Mammary epithelial cell (primary cell): ENCODE measurements at regions of chr11 and their contacts with region 1.

Region 1: DNA sequence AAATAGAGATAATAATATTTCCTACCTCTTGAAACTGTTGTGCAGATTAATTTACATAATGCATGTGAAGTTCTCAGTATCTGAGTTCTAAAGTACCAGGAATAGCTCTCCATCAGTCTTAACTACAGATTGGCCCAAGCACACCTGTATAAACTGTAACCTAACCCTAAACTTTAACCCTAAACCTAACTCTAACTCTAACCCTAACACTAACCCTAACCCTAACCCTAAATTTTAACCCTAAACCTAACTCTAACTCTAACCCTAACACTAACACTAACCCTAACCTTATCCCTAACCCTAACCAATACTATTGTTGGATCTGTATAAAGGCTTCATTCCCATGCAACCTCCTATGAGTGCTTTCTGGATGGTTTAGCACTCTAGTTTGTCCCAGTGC is 1445.9 kb upstream of the TENM4 start:
- DNase-seq: no peak
- H3K4me3 ChIP-seq: no peak overlapping the region
- H3K27ac ChIP-seq: no peak overlapping the region
- H3K4me1 ChIP-seq: no peaks in the 10 kb centered on the region
- H3K27me3 ChIP-seq: no peaks in the 10 kb centered on the region
- CTCF ChIP-seq: no peak

Region 2: DNA sequence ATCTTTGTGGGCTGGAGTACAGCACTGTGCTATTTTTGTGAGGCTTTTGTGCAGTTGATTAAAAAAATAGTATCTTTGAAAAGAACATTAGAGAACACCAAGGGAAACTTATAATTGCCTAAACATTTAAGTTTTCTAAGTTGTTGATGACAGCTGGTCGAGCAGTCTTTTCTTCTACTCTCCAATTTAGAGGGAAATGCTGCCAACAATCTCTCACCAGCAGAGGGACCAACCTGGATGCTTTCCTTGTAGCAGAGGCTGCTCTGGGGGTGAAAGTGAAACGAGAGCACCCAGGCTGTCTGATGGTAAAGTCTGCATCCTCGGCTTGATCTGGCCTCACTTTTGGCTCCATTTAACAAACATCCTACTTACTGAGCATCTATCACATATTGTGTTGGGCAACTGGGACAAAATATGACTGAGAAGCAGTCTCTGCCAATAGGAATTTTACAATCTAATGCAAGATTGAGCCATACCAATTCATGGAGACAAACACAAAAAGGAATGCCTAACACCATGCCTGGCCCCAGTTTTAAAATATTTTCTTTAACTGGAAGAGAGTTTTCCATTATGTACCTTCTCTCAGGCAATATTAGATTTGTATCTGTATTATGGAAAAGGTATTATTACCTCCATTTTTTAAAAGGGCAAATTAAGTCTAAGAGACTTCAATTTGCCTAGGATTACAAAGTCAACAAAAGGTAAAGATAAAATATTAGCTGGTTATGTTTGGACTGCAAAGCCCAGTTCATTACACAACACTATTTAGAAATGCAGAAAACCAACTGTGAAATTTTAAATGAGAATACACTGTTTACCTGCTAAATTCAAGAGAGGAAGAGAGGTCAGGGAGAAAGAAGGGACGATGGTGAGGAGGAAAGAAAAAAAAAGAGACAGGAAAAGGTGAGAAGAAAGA is 159.1 kb before region 1 on chr11:
- CTCF ChIA-PET with region 1: no interaction called
- dilution Hi-C with region 1: no loop called
- in situ Hi-C with region 1: no loop called
- intact Hi-C with region 1: no loop called
- DNase-seq: no peak
- H3K4me3 ChIP-seq: no peak overlapping the region
- H3K27ac ChIP-seq: no peak overlapping the region
- H3K4me1 ChIP-seq: peaks cover 16% of the 10 kb centered on the region
- H3K27me3 ChIP-seq: no peaks in the 10 kb centered on the region
- CTCF ChIP-seq: peak; percentile 55 to 56

Region 3: DNA sequence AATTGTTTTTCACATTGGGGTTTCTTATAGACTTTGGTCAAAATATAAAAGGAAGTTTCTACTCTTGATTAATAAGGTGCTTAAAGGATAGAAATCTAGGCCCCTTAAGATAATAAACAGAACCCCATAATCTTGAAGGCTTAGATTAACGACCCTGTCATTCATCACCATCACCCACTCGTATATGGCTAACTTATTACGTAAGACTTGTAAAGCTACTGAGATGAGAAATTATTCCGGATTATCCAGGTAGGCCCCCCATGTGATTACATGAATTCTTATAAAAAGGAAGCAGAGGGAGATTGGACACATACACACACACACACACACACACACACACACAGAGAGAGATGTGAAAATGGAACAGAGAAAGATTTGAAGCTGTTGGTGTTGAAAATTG is 43.4 kb after region 1 on chr11:
- CTCF ChIA-PET with region 1: no interaction called
- dilution Hi-C with region 1: loop called (anchors 5 kb)
- in situ Hi-C with region 1: no loop called
- intact Hi-C with region 1: no loop called
- DNase-seq: no peak
- H3K4me3 ChIP-seq: no peak overlapping the region
- H3K27ac ChIP-seq: no peak overlapping the region
- H3K4me1 ChIP-seq: no peaks in the 10 kb centered on the region
- H3K27me3 ChIP-seq: no peaks in the 10 kb centered on the region
- CTCF ChIP-seq: no peak